PC-9 (cell line): ENCODE measurements at regions of chr1 and their contacts with region 1.

Region 1: GRCh38 chr1:184386312-184387068 is at the start of gene C1orf21:
- DNase-seq: peak; percentile 51 to 88
- H3K4me3 ChIP-seq: peak within 1 kb of the TSS; percentile 84
- H3K27ac ChIP-seq: no peak within 1 kb of the TSS
- H3K4me1 ChIP-seq: peaks cover 12% of the 10 kb centered on the region; the same call in 1 of the 2 replicates
- H3K27me3 ChIP-seq: peaks cover 4% of the 10 kb centered on the region; the same call in 1 of the 2 replicates
- CTCF ChIP-seq: no peak
- total RNA-seq, gene C1orf21: 13.6 and 13.8 TPM in 2 replicates

Region 2: GRCh38 chr1:183635606-183636333 is 750.7 kb before region 1 on chr1 and contains the start of gene ARPC5:
- CTCF ChIA-PET with region 1: no interaction called
- POLR2A ChIA-PET with region 1: interaction called, 10 read pairs
- intact Hi-C with region 1: no loop called
- DNase-seq: peak; percentile 89 to 96
- H3K4me3 ChIP-seq: peak within 1 kb of the TSS; percentile 98
- H3K27ac ChIP-seq: peak within 1 kb of the TSS; percentile 69
- H3K4me1 ChIP-seq: peaks cover 36% of the 10 kb centered on the region
- H3K27me3 ChIP-seq: no peaks in the 10 kb centered on the region
- CTCF ChIP-seq: no peak
- total RNA-seq, gene ARPC5: 143 and 150 TPM in 2 replicates

Region 3: GRCh38 chr1:184399192-184399847 is 12.8 kb after region 1 on chr1:
- CTCF ChIA-PET with region 1: no interaction called
- POLR2A ChIA-PET with region 1: interaction called, 20 read pairs
- intact Hi-C with region 1: no loop called
- DNase-seq: no peak
- H3K4me3 ChIP-seq: no peak overlapping the region
- H3K27ac ChIP-seq: no peak overlapping the region
- H3K4me1 ChIP-seq: no peaks in the 10 kb centered on the region
- H3K27me3 ChIP-seq: no peaks in the 10 kb centered on the region
- CTCF ChIP-seq: no peak

Region 4: GRCh38 chr1:184483101-184483683 is 96.7 kb after region 1 on chr1:
- CTCF ChIA-PET with region 1: no interaction called
- POLR2A ChIA-PET with region 1: no interaction called
- intact Hi-C with region 1: loop called (anchors 5 kb)
- DNase-seq: peak; percentile 32 to 88
- H3K4me3 ChIP-seq: no peak overlapping the region
- H3K27ac ChIP-seq: peak overlapping the region; percentile 39
- H3K4me1 ChIP-seq: peaks cover 33% of the 10 kb centered on the region
- H3K27me3 ChIP-seq: no peaks in the 10 kb centered on the region
- CTCF ChIP-seq: no peak

Region 5: DNA sequence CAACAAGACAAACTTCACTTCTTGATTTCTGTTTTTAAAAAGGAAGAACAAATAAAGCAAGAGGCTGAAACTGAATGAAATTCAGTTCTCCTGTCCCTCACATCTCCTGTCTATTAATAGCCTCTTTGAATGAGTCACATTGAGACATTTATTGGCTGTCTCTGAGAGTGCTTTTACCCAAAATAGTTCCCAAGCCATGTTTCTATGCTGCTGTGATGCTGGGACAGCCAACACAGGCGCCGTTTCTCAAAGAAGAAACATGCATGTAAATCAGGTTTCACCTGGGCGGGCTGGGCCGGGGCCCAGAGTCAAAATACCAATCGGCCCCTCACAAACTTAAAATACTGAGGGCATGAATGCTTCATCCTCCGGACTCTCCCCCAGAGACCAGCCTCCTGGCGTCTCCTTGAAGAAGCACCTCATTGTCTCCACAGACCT is 263.0 kb after region 1 on chr1:
- CTCF ChIA-PET with region 1: no interaction called
- POLR2A ChIA-PET with region 1: interaction called, 10 read pairs
- intact Hi-C with region 1: no loop called
- DNase-seq: no peak
- H3K4me3 ChIP-seq: no peak overlapping the region
- H3K27ac ChIP-seq: no peak overlapping the region
- H3K4me1 ChIP-seq: no peaks in the 10 kb centered on the region
- H3K27me3 ChIP-seq: no peaks in the 10 kb centered on the region
- CTCF ChIP-seq: no peak